AG04450 (cell line): ENCODE measurements at regions of chr6 and their contacts with region 1.

Region 1: DNA sequence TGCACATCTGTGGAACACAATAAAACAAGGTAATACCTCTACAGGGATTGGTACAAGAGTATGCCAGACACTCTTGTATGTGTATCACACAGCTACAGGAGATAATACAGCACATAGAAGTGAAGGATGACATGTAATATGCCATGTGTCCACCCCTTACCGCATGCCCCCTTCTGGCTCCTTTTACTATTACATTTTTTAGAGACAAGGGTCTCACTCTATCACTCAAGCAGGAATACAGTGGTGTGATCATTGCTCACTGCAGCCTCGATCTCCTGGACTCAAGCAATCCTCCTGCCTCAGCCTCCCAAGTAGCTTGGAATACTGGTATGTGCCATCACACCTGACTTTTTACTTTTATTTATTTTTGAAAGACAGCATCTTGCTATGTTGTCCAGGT is 4.2 kb upstream of the NCR3 start:
- DNase-seq: no peak
- H3K4me3 ChIP-seq: no peak overlapping the region
- H3K27ac ChIP-seq: no peak overlapping the region
- H3K27me3 ChIP-seq: no peaks in the 10 kb centered on the region
- CTCF ChIP-seq: peak; percentile 47

Region 2: GRCh38 chr6:31403283-31403989 is 193.6 kb before region 1 on chr6 and contains the start of gene MICA:
- CTCF ChIA-PET with region 1: interaction called, 3 read pairs
- POLR2A ChIA-PET with region 1: interaction called, 12 read pairs
- DNase-seq: peak; percentile 34
- H3K4me3 ChIP-seq: peak within 1 kb of the TSS; percentile 90
- H3K27ac ChIP-seq: peak within 1 kb of the TSS; percentile 21
- H3K27me3 ChIP-seq: no peaks in the 10 kb centered on the region
- CTCF ChIP-seq: no peak
- polyA plus RNA-seq, gene MICA: 39.9 and 48.5 TPM in 2 replicates

Region 3: DNA sequence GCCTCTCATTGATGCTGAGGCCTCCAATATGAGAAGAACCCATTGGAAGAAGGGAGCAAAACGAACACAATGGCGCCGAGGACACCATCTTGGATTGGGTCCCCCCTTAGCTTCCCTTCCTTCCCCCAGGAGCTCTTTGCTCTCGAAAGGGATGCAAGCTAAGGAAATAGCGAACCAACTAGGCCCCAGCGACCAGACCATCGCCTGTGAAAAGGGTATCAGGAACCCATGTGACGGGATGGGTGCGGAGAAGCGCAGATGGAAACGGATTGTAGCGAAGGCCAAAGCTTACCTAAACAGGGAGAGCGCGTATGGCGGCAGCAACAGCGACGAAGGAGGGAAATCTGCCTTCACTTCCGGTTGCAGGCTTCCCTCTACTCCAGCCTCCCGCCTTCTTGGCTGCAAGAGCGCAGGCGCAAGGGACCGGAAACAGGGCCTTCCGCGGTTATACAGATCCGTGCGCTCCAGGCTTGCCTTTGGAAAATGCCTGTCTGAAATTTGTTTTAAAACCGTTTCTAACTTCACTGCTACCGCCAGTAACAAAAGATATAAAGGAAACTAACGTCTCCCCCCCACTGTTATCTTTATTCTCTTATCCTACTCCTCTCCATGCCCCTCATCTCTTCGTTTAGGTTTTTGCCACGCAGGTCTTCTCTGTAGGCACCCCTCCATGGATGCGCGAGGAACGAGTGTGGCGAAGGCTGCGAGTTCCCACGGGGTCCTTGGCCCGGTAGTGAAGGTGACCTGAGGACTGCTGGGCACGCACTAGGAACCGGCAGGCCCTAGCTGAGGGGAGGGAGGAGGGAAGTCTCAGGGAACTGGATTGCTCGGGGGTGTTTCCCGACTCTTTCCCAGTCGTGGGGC is 55.1 kb before region 1 on chr6 and contains the start of gene DDX39B:
- CTCF ChIA-PET with region 1: interaction called, 388 read pairs
- POLR2A ChIA-PET with region 1: interaction called, 17 read pairs
- DNase-seq: peak; percentile 93
- H3K4me3 ChIP-seq: peak within 1 kb of the TSS; percentile 92
- H3K27ac ChIP-seq: peak within 1 kb of the TSS; percentile 95
- H3K27me3 ChIP-seq: no peaks in the 10 kb centered on the region
- CTCF ChIP-seq: no peak
- polyA plus RNA-seq, gene DDX39B: 434 and 480 TPM in 2 replicates

Region 4: DNA sequence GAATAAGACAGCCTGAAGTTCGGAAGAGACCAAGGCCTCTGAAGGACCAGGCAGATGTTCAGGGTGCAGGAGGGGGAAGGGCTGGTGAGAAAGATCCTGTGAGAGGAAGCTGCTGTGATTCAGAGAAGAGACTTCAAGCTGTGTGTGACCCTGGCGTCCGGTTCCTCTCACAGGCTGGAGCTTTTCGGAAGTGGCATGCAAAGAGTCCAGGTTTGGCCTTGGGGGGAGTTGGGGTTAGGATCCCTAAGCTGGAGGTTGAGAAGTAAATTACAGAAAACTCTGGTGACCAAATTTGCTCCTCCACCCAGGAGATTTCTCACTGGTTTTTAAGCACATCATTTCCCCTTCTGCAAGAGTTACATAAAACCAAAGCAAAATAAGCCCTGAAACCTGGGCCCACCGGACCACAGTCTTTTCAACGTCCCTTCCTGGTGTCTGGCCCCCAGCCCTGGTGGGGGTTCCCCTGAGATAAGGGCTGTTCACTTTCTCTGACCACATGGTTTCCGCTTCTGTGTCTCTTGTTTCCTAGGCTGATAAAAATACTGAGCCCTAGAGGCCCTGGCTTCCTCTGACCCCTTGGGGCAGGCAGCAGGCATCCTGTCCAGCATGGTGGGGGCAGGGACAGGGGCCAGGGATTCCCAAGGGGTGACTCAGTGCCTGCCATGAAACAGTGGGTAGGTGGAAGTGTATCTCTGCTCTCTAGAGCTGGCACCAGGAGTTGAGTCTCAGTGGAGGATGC is 36.9 kb before region 1 on chr6:
- CTCF ChIA-PET with region 1: interaction called, 16 read pairs
- POLR2A ChIA-PET with region 1: no interaction called
- DNase-seq: no peak
- H3K4me3 ChIP-seq: no peak overlapping the region
- H3K27ac ChIP-seq: peak overlapping the region; percentile 68
- H3K27me3 ChIP-seq: peaks cover under 1% of the 10 kb centered on the region
- CTCF ChIP-seq: no peak

Region 5: DNA sequence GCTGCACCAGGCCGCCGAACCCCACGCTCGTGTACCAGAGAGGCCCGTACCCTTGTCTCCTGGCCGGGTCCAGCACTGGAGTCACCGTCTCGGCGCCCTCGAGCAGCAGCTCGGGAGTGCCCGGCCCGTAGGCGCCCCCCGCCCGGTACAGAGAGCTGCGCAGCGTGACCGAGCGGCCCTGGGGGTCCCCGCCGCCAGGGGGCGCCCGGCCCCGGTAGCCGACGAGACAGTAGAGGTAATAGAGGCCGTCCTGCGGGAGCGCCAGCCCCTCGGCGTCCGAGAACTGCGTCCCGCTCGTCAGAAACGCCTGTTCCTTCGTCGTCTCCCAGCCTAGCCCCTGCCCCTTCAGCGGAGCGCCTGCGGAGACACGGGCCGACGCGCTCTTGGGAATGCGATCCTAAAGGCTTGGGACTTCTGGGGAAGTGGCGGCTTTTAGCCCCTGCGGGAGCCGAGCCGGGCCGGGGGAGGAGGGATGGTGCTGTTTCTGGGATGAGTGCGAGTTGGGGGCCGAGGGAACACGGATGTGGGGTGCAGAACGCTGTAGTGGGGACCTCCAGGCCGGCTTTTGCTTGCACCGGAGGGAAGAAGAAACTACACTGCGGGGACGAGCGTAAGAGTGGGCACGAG is 16.1 kb before region 1 on chr6:
- CTCF ChIA-PET with region 1: interaction called, 132 read pairs
- POLR2A ChIA-PET with region 1: no interaction called
- DNase-seq: peak; percentile 42
- H3K4me3 ChIP-seq: peak overlapping the region; percentile 86
- H3K27ac ChIP-seq: peak overlapping the region; percentile 57
- H3K27me3 ChIP-seq: peaks cover 5% of the 10 kb centered on the region
- CTCF ChIP-seq: peak; percentile 87

Region 6: GRCh38 chr6:32255199-32256153 is 658.5 kb after region 1 on chr6:
- CTCF ChIA-PET with region 1: no interaction called
- POLR2A ChIA-PET with region 1: no interaction called
- DNase-seq: peak; percentile 81
- H3K4me3 ChIP-seq: peak overlapping the region; percentile 56
- H3K27ac ChIP-seq: peak overlapping the region; percentile 97
- H3K27me3 ChIP-seq: peaks cover 2% of the 10 kb centered on the region
- CTCF ChIP-seq: peak; percentile 69